ENCODE measurements at regions of chr22 and their contacts with region 1.

Region 1: GRCh38 chr22:25564320-25564978 is at the start of gene GRK3:
- DNase-seq: peak; percentile 88
- H3K4me3 ChIP-seq: peak within 1 kb of the TSS; percentile 48 to 94 (median 90)
- H3K27ac ChIP-seq: peak within 1 kb of the TSS; percentile 66 to 83 (median 76)
- H3K4me1 ChIP-seq: peaks cover 0 to 39% (median 10%) of the 10 kb centered on the region in 4 donors
- H3K27me3 ChIP-seq: no peaks in the 10 kb centered on the region
- CTCF ChIP-seq: no peak
- EP300 ChIP-seq: no peak
- POLR2A ChIP-seq: no peak
- total RNA-seq, gene GRK3: 6.1 to 9.6 (median 8.3) TPM

Region 2: GRCh38 chr22:25395915-25396314 is 168.5 kb before region 1 on chr22:
- intact Hi-C with region 1: no loop called
- DNase-seq: no peak
- H3K4me3 ChIP-seq: no peak overlapping the region
- H3K27ac ChIP-seq: no peak overlapping the region
- H3K4me1 ChIP-seq: peaks cover 0 to 10% (median 8%) of the 10 kb centered on the region in 4 donors
- H3K27me3 ChIP-seq: no peaks in the 10 kb centered on the region
- CTCF ChIP-seq: no peak
- EP300 ChIP-seq: no peak
- POLR2A ChIP-seq: no peak

Region 3: GRCh38 chr22:25666308-25666707 is 101.9 kb after region 1 on chr22:
- intact Hi-C with region 1: loop called (anchors 10 kb)
- DNase-seq: peak; percentile 84
- H3K4me3 ChIP-seq: no peak overlapping the region
- H3K27ac ChIP-seq: no peak overlapping the region
- H3K4me1 ChIP-seq: peaks cover 0 to 25% (median 10%) of the 10 kb centered on the region in 4 donors
- H3K27me3 ChIP-seq: no peaks in the 10 kb centered on the region
- CTCF ChIP-seq: no peak
- EP300 ChIP-seq: no peak
- POLR2A ChIP-seq: no peak

Region 4: DNA sequence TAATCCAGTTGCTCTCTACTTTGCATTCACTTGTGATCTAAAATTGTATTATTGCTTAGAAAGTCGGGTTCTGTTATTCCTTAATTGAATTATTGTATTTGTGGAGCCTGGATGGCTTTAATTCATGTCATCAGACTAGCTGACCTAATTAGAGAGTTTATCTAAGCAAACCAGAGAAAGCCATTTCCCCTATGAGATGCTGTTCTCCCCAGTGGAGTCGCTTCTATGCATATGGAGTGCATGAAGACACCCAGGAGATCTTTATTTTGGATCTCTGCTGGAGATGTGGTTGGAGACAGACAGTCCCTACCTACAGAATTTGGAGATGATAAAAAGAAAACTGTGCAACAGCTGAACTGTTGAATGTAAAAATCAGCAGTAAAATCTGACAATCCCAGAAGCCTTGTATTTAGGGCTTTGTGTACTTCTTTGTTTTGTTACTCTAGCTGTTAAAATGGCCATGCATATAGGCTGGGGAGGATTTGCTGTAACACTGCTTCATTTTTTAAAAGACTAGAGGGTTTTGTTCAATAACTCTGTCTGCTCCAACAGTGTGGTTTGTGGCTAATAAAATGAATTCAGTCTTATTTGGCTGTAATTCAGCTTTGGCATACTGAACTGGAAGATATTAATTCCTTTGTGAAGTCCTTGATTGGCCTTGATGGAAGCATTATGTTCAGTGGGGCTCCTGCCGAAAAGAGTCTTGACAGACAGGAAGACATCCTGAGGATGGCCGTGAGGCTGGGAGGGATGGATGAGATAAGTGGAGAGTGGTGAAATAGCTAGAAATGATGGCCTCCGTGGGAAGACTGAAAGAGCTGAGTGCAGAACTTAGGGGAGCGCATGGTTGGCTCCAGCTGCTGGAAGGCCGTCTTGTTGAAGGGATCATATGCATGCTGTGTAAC is 132.6 kb after region 1 on chr22:
- intact Hi-C with region 1: loop called (anchors 10 kb)
- DNase-seq: no peak
- H3K4me3 ChIP-seq: no peak overlapping the region
- H3K27ac ChIP-seq: no peak overlapping the region
- H3K4me1 ChIP-seq: peaks cover 0 to 8% (median 3%) of the 10 kb centered on the region in 4 donors
- H3K27me3 ChIP-seq: no peaks in the 10 kb centered on the region
- CTCF ChIP-seq: no peak
- EP300 ChIP-seq: no peak
- POLR2A ChIP-seq: no peak